ENCODE measurements at regions of chr11 and their contacts with region 1.

Region 1: GRCh38 chr11:12137938-12138731 is 27.7 kb downstream of the MICAL2 start:
- DNase-seq: peak in 5 of 10 donors; percentile 60 to 82 (median 65)
- H3K4me3 ChIP-seq: peak overlapping the region in 1 of 59 donors; percentile 8
- H3K27ac ChIP-seq: peak overlapping the region in 54 of 59 donors; percentile 4 to 91 (median 74)
- H3K27me3 ChIP-seq: no peaks in the 10 kb centered on the region
- CTCF ChIP-seq: no peak

Region 2: DNA sequence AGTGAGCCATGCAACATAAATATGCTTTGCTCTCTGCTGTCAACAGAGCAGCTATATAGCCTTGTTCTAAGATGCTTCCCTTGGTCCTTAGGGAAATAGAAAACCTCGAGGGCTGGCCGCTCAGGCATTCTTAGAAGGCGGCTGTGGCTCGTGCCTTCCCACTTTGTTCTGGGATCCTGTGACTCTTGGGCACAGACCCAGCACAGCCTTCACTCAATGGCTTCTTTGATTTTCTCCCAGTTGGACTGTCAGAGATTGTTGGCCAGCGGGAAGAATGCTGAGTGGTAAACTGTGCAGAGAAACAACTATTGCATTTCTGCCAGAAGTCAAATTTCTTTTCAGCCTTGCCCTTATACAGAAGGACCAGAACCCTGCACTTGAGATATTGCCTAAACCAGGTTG is 37.3 kb before region 1 on chr11:
- intact Hi-C with region 1: loop called in 1 of 2 experiments (anchors 5 kb)
- DNase-seq: peak in 9 of 10 donors; percentile 74 to 93 (median 79)
- H3K4me3 ChIP-seq: peak overlapping the region in 1 of 59 donors; percentile 25
- H3K27ac ChIP-seq: peak overlapping the region in 3 of 59 donors; percentile 42 to 52 (median 51)
- H3K27me3 ChIP-seq: peaks cover 0 to 4% (median 0%) of the 10 kb centered on the region in 45 donors
- CTCF ChIP-seq: peak in 14 of 56 donors; percentile 12 to 41 (median 24)

Measured in dorsolateral prefrontal cortex (tissue), 120 donors.